OCI-LY7 (cell line): ENCODE measurements at regions of chr17 and their contacts with region 1.

Region 1: DNA sequence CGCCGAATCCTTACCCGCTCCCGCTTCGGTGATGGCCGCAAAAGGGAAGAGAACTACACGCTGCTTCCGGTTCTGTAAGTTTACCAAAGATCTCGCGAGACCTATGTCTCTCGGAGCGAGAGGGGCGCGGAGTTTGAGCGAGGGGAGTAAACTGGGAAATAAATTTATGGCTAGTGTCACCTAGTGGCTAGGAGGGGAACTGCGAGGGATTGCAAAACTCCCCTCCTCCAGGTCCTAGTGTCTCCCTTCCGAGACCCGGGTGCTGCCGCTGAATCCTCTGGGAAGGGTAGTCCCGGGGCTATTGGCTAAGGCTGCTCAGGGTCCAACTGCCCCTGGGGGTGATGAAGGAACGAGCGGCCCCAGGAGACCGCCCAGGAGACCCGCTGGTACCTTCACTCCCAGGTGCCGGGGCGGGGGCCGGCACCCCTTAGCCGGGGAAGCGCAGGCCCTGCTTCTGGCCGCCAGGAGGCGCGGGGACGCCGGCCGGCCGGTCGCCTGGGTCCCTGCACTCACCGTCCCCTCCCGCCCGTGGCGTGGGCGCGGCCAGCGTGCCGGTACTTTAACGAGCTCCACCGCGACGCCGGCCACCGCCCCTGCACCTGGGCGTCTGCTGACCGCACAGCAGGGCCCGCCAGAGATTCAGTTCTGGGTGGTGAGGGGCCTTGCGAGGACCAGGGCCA is at the start of gene RPL26:
- DNase-seq: peak; percentile 100
- H3K4me3 ChIP-seq: peak within 1 kb of the TSS; percentile 78
- H3K27ac ChIP-seq: peak within 1 kb of the TSS; percentile 67
- H3K4me1 ChIP-seq: peaks cover 44% of the 10 kb centered on the region
- CTCF ChIP-seq: peak; percentile 99
- total RNA-seq, gene RPL26: 4,013 and 5,038 TPM in 2 replicates

Region 2: DNA sequence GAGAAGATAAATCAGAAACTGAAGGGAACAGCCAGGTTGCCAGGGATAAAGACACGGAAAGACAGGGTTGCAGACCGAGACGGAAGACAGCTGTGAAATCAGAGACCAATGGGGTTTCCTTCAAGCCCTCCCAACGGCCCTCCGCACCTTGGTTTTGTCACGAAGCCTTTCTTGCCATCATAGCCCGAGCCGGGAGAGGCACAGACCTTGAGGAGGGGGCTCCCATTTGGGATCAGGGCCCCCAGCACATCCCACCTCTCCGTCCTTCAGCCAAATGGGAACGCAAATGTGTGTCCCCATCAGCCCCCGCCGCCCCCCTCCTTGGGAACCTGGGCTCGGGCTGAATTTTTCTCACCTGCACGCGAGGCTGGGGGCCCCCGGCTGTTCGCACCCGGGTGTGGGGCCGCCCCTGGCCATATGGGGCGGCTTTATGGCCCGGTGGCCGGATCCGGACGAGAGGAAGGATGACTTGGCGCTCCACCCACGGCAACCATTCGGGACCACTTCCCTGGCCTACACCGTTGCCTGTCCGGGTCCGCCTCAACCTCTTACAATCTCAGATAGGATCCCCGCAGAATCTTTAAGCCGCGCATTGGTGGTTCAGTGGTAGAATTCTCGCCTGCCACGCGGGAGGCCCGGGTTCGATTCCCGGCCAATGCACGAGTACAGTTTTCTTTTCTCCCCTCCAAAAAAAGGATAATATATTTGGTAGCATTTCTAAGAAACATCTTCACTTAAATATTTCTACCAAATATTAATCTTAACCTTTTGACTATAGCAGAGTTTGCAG is 257.9 kb before region 1 on chr17:
- CTCF ChIA-PET with region 1: no interaction called
- POLR2A ChIA-PET with region 1: no interaction called
- intact Hi-C with region 1: loop called (anchors 1 kb)
- DNase-seq: peak; percentile 85
- H3K4me3 ChIP-seq: peak overlapping the region; percentile 79
- H3K27ac ChIP-seq: peak overlapping the region; percentile 40
- H3K4me1 ChIP-seq: peaks cover 46% of the 10 kb centered on the region
- CTCF ChIP-seq: no peak

Region 3: DNA sequence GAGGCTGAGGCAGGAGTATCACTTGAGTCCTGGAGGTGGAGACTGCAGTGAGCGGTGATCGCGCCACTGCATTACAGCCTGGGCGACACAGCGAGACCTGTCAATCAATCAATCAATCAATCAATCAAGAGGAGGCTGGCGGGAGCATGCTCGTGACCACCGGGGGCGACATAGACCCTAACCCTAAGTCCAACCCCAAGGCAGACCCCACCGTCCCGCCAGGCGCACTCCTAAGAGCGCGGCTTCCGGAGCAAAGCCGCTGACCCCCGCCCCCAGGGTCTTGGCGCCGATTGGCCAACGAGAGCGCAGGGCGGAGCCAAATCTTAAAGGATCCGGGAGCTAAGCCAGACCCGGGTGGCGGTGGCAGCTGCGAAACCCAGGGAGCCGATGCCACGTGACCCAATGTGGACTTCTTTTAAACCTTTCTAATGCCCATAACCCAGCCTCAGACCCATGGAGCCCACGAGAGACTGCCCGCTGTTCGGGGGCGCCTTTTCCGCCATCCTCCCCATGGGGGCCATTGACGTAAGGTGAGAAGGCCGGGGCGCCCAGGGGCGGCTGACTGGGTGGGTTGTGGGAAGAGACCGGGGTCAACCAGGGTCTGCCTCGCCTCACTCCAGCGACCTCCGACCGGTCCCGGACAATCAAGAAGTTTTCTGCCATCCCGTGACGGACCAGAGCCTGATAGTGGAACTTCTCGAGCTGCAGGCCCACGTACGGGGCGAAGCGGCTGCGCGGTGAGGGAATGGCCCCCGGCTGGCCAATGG is 94.8 kb before region 1 on chr17 and contains the start of gene RANGRF:
- CTCF ChIA-PET with region 1: no interaction called
- POLR2A ChIA-PET with region 1: no interaction called
- intact Hi-C with region 1: no loop called
- DNase-seq: peak; percentile 90
- H3K4me3 ChIP-seq: peak within 1 kb of the TSS; percentile 83
- H3K27ac ChIP-seq: peak within 1 kb of the TSS; percentile 46
- H3K4me1 ChIP-seq: peaks cover 42% of the 10 kb centered on the region
- CTCF ChIP-seq: peak; percentile 29; the same call in 1 of the 2 replicates
- total RNA-seq, gene RANGRF: 30.6 and 32.2 TPM in 2 replicates

Region 4: GRCh38 chr17:8435245-8436168 is 52.2 kb after region 1 on chr17 and contains the start of gene NDEL1:
- CTCF ChIA-PET with region 1: no interaction called
- POLR2A ChIA-PET with region 1: no interaction called
- intact Hi-C with region 1: loop called (anchors 1 kb)
- DNase-seq: peak; percentile 97
- H3K4me3 ChIP-seq: peak within 1 kb of the TSS; percentile 99
- H3K27ac ChIP-seq: peak within 1 kb of the TSS; percentile 70
- H3K4me1 ChIP-seq: peaks cover 15% of the 10 kb centered on the region
- CTCF ChIP-seq: no peak
- total RNA-seq, gene NDEL1: 37.9 and 40.0 TPM in 2 replicates

Region 5: DNA sequence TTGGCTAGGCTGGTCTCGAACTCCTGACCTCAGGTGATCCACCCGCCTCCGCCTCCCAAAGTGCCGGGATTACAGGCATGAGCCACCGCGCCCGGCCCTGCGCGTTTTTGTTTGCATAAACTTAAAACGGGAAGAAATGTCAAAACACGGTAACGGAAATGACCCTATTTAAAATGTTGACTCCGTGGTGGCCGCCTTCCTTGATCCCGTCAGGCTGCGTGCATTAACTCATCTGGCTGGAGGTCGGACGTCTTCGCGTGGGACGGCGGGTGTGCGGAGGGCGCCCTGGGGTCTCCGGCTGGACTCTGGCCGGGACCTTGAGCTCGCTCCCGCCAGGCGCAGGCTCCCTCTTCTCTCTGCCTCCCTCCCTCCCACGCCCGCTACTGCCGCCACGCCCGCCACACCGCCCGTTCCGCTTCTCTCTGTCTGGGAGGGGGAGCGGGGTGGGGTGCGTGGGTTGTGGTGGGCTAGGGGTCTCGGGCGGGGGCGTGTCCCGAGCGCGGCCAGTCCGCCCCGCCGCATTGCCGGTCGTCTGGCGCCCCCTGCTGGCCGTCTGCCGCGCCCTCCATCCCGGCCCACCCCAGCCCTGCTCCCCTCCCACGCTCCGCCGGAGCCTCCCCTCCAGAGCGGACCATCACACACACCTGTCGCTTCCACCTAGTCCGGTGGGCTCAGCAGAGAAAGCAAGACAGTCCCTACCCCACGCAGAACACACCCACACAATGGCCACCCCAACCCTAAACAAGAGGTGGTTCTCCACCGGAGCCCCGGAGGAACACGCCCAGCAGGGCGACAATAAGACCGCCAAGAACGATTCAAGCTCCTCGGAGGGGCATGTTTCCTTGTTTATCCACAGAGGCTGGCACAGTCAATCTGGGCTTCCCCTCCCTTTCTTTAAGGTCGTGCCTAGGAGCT is 362.6 kb after region 1 on chr17:
- CTCF ChIA-PET with region 1: no interaction called
- POLR2A ChIA-PET with region 1: no interaction called
- intact Hi-C with region 1: loop called (anchors 10 kb)
- DNase-seq: peak; percentile 57
- H3K4me3 ChIP-seq: peak overlapping the region; percentile 73
- H3K27ac ChIP-seq: no peak overlapping the region
- H3K4me1 ChIP-seq: no peaks in the 10 kb centered on the region
- CTCF ChIP-seq: peak; percentile 84